ENCODE measurements at regions of chr15 and their contacts with region 1.

Region 1: GRCh38 chr15:91271565-91272153 is 171.6 kb downstream of the SV2B start:
- DNase-seq: peak in 2 of 4 donors; percentile 74 to 80
- ATAC-seq: peak; percentile 96
- H3K4me3 ChIP-seq: no peak overlapping the region
- H3K27ac ChIP-seq: no peak overlapping the region
- H3K4me1 ChIP-seq: peaks cover 0 to 8% of the 10 kb centered on the region in 2 donors
- H3K27me3 ChIP-seq: peaks cover 3 to 19% of the 10 kb centered on the region in 2 donors
- CTCF ChIP-seq: peak; percentile 52 to 83

Region 2: DNA sequence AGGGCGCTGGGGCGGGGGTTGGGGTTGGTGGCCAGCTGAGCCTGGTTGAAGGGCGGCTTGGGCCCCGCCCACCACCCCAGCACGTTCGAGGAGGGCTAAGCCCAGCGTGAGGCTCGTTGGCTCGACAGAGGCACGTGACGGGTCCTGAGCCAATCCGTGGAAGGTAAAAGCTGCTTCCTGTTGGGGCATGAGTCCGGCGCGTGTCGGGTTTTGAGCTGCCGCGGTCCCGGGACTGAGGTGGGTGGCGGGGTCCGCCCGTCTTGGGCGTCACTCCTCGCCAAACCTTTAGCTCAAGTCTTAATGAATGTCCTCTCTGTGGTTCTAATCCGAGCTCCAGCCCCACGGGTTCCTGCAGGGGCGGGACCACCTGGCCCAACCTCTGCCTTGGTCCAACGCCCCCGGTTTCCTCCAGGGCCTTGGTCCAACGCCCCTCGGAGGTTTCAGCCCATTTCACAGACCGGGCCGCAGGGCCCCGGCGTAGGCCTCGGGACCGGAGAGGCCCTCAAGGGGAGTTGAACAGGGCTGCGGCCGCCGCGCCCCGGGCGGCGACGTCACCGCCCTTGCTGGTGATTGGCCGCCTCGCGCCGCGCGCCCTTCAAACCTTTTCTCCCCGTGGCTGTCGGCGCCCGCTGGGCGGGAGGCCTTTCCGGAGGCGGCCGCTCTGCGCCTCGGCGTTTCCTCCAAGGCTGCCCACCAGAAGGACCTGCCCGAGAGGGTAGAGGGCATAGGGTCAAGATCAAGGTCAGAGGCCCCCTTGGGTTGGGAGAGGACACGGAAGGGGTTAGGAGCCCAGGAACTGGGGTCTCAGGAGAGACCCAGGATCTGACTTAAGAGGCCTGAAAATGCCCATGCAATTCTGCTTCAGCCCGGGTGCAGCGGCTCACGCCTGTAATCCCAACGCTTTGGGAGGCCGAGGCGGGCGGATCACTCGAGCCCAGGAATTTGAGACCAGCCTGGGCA is 316.7 kb before region 1 on chr15 and contains the start of gene RCCD1:
- intact Hi-C with region 1: loop called in 1 of 2 experiments (anchors 5 kb)
- DNase-seq: peak; percentile 89 to 98 (median 96)
- ATAC-seq: peak; percentile 95
- H3K4me3 ChIP-seq: peak within 1 kb of the TSS; percentile 67 to 95
- H3K27ac ChIP-seq: peak within 1 kb of the TSS; percentile 83 to 84
- H3K4me1 ChIP-seq: peaks cover 7 to 35% of the 10 kb centered on the region in 2 donors
- H3K27me3 ChIP-seq: no peaks in the 10 kb centered on the region
- CTCF ChIP-seq: peak in 1 of 2 donors; percentile 11
- polyA plus RNA-seq, gene RCCD1: 16.1 to 21.2 (median 20.0) TPM

Region 3: GRCh38 chr15:91049378-91050127 is 222.1 kb before region 1 on chr15:
- intact Hi-C with region 1: loop called in 1 of 2 experiments (anchors 10 kb)
- DNase-seq: peak in 2 of 4 donors; percentile 56 to 73
- ATAC-seq: peak; percentile 98
- H3K4me3 ChIP-seq: no peak overlapping the region
- H3K27ac ChIP-seq: no peak overlapping the region
- H3K4me1 ChIP-seq: peaks cover 0 to 8% of the 10 kb centered on the region in 2 donors
- H3K27me3 ChIP-seq: peaks cover 0 to 26% of the 10 kb centered on the region in 2 donors
- CTCF ChIP-seq: peak; percentile 49 to 52

Region 4: GRCh38 chr15:91135201-91136130 is 136.2 kb before region 1 on chr15:
- intact Hi-C with region 1: no loop called
- DNase-seq: no peak
- ATAC-seq: no peak
- H3K4me3 ChIP-seq: no peak overlapping the region
- H3K27ac ChIP-seq: no peak overlapping the region
- H3K4me1 ChIP-seq: no peaks in the 10 kb centered on the region
- H3K27me3 ChIP-seq: peaks cover 3 to 20% of the 10 kb centered on the region in 2 donors
- CTCF ChIP-seq: no peak

Measured in left lung (tissue), 14 donors.